CD8-positive, alpha-beta T cell (primary cell): ENCODE measurements at regions of chr6 and their contacts with region 1.

Region 1: GRCh38 chr6:124430740-124431318 is 531.4 kb upstream of the RNF217 start:
- DNase-seq: no peak
- ATAC-seq: no peak
- H3K4me3 ChIP-seq: no peak overlapping the region
- H3K4me3 Mint-ChIP-seq: no peak overlapping the region
- H3K27ac ChIP-seq: no peak overlapping the region
- H3K27ac Mint-ChIP-seq: no peak overlapping the region
- H3K4me1 ChIP-seq: no peaks in the 10 kb centered on the region
- H3K4me1 Mint-ChIP-seq: no peaks in the 10 kb centered on the region
- H3K27me3 ChIP-seq: no peaks in the 10 kb centered on the region
- H3K27me3 Mint-ChIP-seq: no peaks in the 10 kb centered on the region
- CTCF ChIP-seq: no peak

Region 2: GRCh38 chr6:124475176-124475575 is 44.3 kb after region 1 on chr6:
- CTCF ChIA-PET with region 1: no interaction called
- POLR2A ChIA-PET with region 1: no interaction called
- intact Hi-C with region 1: loop called in 1 of 2 experiments (anchors 1 kb)
- DNase-seq: no peak
- ATAC-seq: no peak
- H3K4me3 ChIP-seq: no peak overlapping the region
- H3K4me3 Mint-ChIP-seq: no peak overlapping the region
- H3K27ac ChIP-seq: no peak overlapping the region
- H3K27ac Mint-ChIP-seq: no peak overlapping the region
- H3K4me1 ChIP-seq: no peaks in the 10 kb centered on the region
- H3K4me1 Mint-ChIP-seq: no peaks in the 10 kb centered on the region
- H3K27me3 ChIP-seq: no peaks in the 10 kb centered on the region
- H3K27me3 Mint-ChIP-seq: no peaks in the 10 kb centered on the region
- CTCF ChIP-seq: no peak